ENCODE measurements at regions of chr1 and their contacts with region 1.

Region 1: GRCh38 chr1:151254217-151255213 is at the start of gene PSMD4:
- DNase-seq: peak; percentile 82 to 96 (median 93)
- ATAC-seq: peak; percentile 98
- H3K4me3 ChIP-seq: peak within 1 kb of the TSS; percentile 73
- H3K4me3 Mint-ChIP-seq: peak within 1 kb of the TSS; percentile 89 to 99 (median 96)
- H3K27ac ChIP-seq: peak within 1 kb of the TSS; percentile 79
- H3K27ac Mint-ChIP-seq: peak within 1 kb of the TSS; percentile 91 to 100 (median 95)
- H3K4me1 ChIP-seq: peaks cover 4 to 6% of the 10 kb centered on the region in 2 donors
- H3K4me1 Mint-ChIP-seq: peaks cover 23 to 47% (median 36%) of the 10 kb centered on the region in 7 donors
- H3K27me3 ChIP-seq: no peaks in the 10 kb centered on the region
- H3K27me3 Mint-ChIP-seq: peaks cover 0 to 3% (median 0%) of the 10 kb centered on the region in 5 donors
- total RNA-seq, gene PSMD4: 72.0 to 193 (median 126) TPM

Region 2: GRCh38 chr1:150363426-150364230 is 890.9 kb before region 1 on chr1 and contains the start of gene RPRD2:
- CTCF ChIA-PET with region 1: no interaction called
- POLR2A ChIA-PET with region 1: no interaction called
- intact Hi-C with region 1: loop called in 1 of 2 experiments (anchors 1 kb)
- DNase-seq: peak; percentile 83 to 100 (median 99)
- ATAC-seq: peak; percentile 97
- H3K4me3 ChIP-seq: peak within 1 kb of the TSS; percentile 99
- H3K4me3 Mint-ChIP-seq: peak within 1 kb of the TSS; percentile 86 to 100 (median 98)
- H3K27ac ChIP-seq: peak within 1 kb of the TSS; percentile 84
- H3K27ac Mint-ChIP-seq: peak within 1 kb of the TSS; percentile 95 to 100 (median 98)
- H3K4me1 ChIP-seq: peaks cover 10% of the 10 kb centered on the region in 2 donors
- H3K4me1 Mint-ChIP-seq: peaks cover 25 to 37% (median 32%) of the 10 kb centered on the region in 7 donors
- H3K27me3 ChIP-seq: no peaks in the 10 kb centered on the region
- H3K27me3 Mint-ChIP-seq: peaks cover 0 to 2% (median 0%) of the 10 kb centered on the region in 5 donors
- total RNA-seq, gene RPRD2: 33.2 to 62.2 (median 40.6) TPM

Region 3: DNA sequence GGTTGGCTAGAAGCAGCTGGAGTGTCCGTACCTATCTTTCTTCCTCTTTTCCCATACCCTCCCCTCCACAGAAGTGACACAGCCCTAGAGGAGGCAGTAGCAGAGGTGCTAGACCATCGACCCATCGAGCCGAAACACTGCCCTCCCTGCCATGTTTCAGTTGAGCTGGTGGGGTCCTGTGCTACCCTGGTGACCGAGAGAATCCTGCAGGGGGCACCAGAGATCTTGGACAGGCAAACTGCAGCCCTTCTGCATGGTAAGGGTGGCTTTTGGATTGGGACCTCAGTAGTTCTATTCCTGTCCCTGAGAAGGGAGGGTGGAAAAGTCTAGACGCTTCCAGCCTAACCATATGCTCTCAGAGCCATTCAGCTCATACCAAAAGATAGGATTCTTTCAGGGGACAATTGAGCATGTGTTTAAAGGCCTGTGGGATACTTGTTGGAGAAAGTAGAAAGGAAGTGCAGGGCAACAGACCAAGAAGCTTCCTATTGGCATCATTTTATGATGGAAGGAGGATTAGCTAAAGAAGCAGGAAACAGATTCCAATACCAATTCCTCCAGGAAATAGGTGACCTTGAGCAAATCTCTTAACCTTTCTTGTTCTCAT is 229.9 kb before region 1 on chr1:
- CTCF ChIA-PET with region 1: interaction called, 3 read pairs
- POLR2A ChIA-PET with region 1: no interaction called
- intact Hi-C with region 1: loop called (anchors 1 kb)
- DNase-seq: peak; percentile 72 to 91 (median 83)
- ATAC-seq: peak; percentile 100
- H3K4me3 ChIP-seq: no peak overlapping the region
- H3K4me3 Mint-ChIP-seq: peak overlapping the region; percentile 16 to 73 (median 61)
- H3K27ac ChIP-seq: no peak overlapping the region
- H3K27ac Mint-ChIP-seq: peak overlapping the region; percentile 37 to 93 (median 74)
- H3K4me1 ChIP-seq: no peaks in the 10 kb centered on the region
- H3K4me1 Mint-ChIP-seq: peaks cover 4 to 22% (median 6%) of the 10 kb centered on the region in 7 donors
- H3K27me3 ChIP-seq: no peaks in the 10 kb centered on the region
- H3K27me3 Mint-ChIP-seq: no peaks in the 10 kb centered on the region

Region 4: DNA sequence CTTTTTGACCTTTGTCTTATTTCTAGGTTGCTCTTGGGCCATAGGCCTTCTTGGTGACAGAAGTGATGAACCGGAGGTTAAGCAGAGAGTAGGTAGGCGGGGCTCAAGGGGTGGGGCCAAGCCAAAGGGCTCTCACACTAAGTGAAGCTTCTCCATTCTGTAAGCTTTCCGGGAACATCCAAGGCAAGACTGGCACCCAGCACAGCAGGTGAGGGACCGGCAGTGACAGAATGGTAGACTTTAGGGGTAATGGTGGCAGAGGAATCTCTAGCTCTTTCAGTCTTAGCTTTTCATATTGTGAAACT is 98.0 kb before region 1 on chr1 and contains the start of gene TNFAIP8L2:
- CTCF ChIA-PET with region 1: interaction called, 4 read pairs
- POLR2A ChIA-PET with region 1: interaction called, 13 read pairs
- intact Hi-C with region 1: loop called in 1 of 2 experiments (anchors 2 kb)
- DNase-seq: peak in 7 of 9 donors; percentile 50 to 75 (median 66)
- ATAC-seq: peak; percentile 90
- H3K4me3 ChIP-seq: peak within 1 kb of the TSS; percentile 98
- H3K4me3 Mint-ChIP-seq: peak within 1 kb of the TSS; percentile 93 to 100 (median 99)
- H3K27ac ChIP-seq: peak within 1 kb of the TSS; percentile 78
- H3K27ac Mint-ChIP-seq: peak within 1 kb of the TSS; percentile 88 to 97 (median 95)
- H3K4me1 ChIP-seq: peaks cover 23 to 27% of the 10 kb centered on the region in 2 donors
- H3K4me1 Mint-ChIP-seq: peaks cover 34 to 61% (median 46%) of the 10 kb centered on the region in 7 donors
- H3K27me3 ChIP-seq: no peaks in the 10 kb centered on the region
- H3K27me3 Mint-ChIP-seq: no peaks in the 10 kb centered on the region
- total RNA-seq, gene TNFAIP8L2: 3.1 to 59.4 (median 37.6) TPM

Region 5: DNA sequence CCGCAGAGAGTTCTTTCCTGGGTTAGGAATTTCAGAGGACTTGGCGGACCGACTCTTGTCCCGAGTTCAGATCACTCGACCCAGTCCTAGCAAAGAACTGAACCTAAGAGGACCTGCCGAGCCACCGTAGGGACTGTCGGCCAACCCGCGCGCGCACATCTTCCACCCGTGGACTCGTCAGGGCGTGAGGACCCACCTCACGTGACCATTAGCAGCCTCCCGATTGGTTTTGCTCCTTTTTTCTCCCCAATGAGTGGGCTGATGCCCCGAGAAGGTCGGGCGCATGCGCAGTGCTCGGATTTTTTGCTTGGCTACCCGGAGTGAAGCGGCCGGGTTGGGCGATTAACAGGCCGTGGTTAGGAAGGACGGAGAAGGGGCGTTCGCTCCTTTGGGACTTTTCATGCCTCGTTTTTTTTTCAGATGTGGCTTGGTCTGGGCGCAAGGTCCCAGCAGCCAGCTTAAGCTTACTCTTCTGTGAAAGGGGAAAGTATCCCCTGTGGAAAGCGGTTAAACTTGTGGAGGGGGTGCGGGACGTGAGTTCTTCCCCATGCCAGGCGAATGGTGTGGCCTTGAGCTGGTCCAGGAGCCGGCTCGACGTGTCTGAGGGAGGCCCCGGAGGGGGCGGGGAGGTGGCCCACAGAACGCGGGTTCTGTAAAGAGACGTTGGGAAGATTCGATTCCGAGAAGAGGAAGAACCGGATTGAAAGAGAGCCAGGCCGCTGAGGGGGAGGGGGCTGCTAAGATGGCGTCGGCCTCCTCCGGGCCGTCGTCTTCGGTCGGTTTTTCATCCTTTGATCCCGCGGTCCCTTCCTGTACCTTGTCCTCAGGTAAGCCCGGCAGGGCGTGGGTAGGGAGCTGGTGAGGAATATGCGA is 56.0 kb before region 1 on chr1 and contains the start of gene PIP5K1A:
- CTCF ChIA-PET with region 1: interaction called, 5 read pairs
- POLR2A ChIA-PET with region 1: interaction called, 3 read pairs
- intact Hi-C with region 1: loop called (anchors 1 kb)
- DNase-seq: peak; percentile 96 to 99 (median 97)
- ATAC-seq: peak; percentile 98
- H3K4me3 ChIP-seq: peak within 1 kb of the TSS; percentile 83
- H3K4me3 Mint-ChIP-seq: peak within 1 kb of the TSS; percentile 93 to 100 (median 98)
- H3K27ac ChIP-seq: peak within 1 kb of the TSS; percentile 88
- H3K27ac Mint-ChIP-seq: peak within 1 kb of the TSS; percentile 95 to 99 (median 98)
- H3K4me1 ChIP-seq: peaks cover 11% of the 10 kb centered on the region in 2 donors
- H3K4me1 Mint-ChIP-seq: peaks cover 31 to 56% (median 46%) of the 10 kb centered on the region in 7 donors
- H3K27me3 ChIP-seq: no peaks in the 10 kb centered on the region
- H3K27me3 Mint-ChIP-seq: peaks cover 0 to 12% (median 0%) of the 10 kb centered on the region in 5 donors
- total RNA-seq, gene PIP5K1A: 56.9 to 76.5 (median 59.5) TPM

Region 6: DNA sequence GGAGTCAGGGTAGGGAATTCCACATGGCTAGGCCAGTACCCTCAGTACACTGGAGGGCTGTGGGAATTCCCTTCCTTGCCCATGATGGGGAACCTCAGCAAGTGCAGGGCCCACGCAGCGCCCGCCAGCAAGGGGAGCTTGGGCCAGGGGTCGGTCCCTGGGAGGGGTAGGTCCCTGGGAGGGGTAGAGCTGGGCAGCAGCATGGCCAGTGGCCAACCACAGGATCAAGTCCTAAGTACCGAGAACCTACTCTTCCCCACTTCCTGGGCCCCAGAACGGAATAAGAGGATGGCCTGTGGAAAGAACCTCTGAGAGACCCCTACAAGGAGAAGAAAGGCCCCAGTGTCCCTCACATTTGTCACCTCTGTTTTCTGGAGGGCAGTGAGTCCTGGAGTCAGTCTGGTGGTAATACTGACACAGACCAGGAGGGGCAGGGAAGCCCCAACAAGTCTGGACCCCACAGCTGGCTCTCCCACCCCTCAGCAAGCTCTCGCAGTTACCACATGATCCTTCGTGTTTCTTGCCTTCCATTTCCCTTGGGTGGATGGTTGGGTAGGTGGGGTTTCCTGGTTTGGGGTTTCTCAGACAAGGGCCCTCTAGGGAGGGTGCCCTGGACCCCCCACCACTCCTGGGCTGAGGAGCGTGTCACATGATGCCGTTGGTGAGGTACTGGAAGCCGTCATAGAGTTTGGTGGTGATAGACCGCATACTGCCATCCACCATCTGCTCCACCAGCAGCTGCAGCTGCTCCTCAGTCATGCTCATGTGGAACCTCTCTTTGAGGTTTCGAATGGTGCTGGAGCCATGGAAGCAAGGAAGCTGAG is 37.9 kb after region 1 on chr1:
- CTCF ChIA-PET with region 1: no interaction called
- POLR2A ChIA-PET with region 1: no interaction called
- intact Hi-C with region 1: no loop called
- DNase-seq: peak in 1 of 9 donors; percentile 23
- ATAC-seq: peak; percentile 47
- H3K4me3 ChIP-seq: no peak overlapping the region
- H3K4me3 Mint-ChIP-seq: no peak overlapping the region
- H3K27ac ChIP-seq: no peak overlapping the region
- H3K27ac Mint-ChIP-seq: peak overlapping the region in 7 of 9 donors; percentile 22 to 86 (median 66)
- H3K4me1 ChIP-seq: no peaks in the 10 kb centered on the region
- H3K4me1 Mint-ChIP-seq: peaks cover 7 to 28% (median 11%) of the 10 kb centered on the region in 7 donors
- H3K27me3 ChIP-seq: no peaks in the 10 kb centered on the region
- H3K27me3 Mint-ChIP-seq: no peaks in the 10 kb centered on the region

Region 7: DNA sequence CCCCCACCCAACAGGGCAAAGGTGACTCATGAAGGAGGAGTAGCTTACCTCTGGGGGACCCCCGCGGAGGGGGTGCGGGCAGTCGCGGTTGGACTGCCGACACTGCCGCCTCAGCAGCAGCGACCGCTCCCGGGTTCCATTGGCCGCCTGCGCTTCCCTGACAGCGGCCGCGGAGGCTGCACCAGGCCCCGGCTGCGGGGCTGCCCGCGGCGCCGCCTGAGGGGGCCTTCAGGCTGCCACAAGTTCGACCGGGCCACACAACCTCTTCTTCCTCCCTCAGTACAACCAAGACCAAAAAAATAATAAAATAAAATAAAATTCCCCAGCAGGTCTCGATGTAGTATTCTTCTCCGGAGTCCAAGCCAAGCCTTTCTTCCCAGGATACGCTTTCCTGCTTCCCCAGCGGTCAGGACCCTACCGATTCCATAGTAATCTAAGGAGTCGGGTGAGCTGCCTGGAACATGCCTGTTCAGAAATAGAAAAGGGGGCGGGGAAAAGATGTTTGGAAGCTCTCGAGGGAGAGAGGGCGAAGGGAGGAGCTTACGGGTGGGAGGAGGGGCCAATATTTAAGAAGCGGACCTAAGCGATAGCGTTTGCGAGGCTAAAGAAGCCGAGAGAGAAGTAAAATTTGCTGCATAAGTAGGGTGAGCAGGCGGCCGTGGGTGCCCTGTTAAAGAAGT is 72.8 kb after region 1 on chr1 and contains the start of gene PI4KB:
- CTCF ChIA-PET with region 1: no interaction called
- POLR2A ChIA-PET with region 1: no interaction called
- intact Hi-C with region 1: loop called (anchors 1 kb)
- DNase-seq: peak; percentile 72 to 96 (median 93)
- ATAC-seq: peak; percentile 96
- H3K4me3 ChIP-seq: peak within 1 kb of the TSS; percentile 72
- H3K4me3 Mint-ChIP-seq: peak within 1 kb of the TSS; percentile 91 to 100 (median 96)
- H3K27ac ChIP-seq: peak within 1 kb of the TSS; percentile 96
- H3K27ac Mint-ChIP-seq: peak within 1 kb of the TSS; percentile 90 to 100 (median 97)
- H3K4me1 ChIP-seq: peaks cover 6 to 18% of the 10 kb centered on the region in 2 donors
- H3K4me1 Mint-ChIP-seq: peaks cover 14 to 53% (median 44%) of the 10 kb centered on the region in 7 donors
- H3K27me3 ChIP-seq: no peaks in the 10 kb centered on the region
- H3K27me3 Mint-ChIP-seq: peaks cover 0 to 2% (median 0%) of the 10 kb centered on the region in 5 donors
- total RNA-seq, gene PI4KB: 64.0 to 91.9 (median 76.3) TPM

Region 8: DNA sequence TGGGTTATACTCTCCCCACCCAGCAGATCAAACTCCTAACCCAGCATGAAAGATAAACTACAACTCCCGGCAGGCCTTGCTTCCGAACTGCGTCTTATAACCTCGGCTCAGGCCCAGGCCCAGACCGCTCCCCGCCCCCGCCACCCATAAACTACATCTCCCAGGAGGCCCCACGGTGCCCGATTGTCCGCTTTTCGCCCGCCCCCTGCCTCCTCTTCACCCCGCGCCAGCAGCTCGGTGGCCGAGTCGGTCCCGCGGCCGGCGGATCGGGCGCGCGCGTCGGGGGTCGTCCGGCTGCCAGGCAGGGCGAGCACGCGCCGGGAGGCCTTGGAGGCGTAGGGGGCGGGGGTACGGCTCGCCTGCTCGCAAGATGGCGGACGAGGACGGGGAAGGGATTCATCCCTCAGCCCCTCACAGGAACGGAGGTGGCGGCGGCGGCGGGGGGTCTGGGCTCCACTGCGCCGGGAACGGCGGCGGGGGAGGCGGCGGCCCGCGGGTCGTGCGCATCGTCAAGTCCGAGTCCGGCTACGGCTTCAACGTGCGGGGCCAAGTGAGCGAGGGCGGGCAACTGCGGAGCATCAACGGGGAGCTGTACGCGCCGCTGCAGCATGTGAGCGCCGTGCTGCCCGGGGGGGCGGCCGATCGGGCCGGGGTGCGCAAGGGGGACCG is 357.5 kb after region 1 on chr1 and contains the start of gene SNX27:
- CTCF ChIA-PET with region 1: no interaction called
- POLR2A ChIA-PET with region 1: no interaction called
- intact Hi-C with region 1: loop called (anchors 1 to 5 kb)
- DNase-seq: peak; percentile 76 to 94 (median 87)
- ATAC-seq: peak; percentile 95
- H3K4me3 ChIP-seq: peak within 1 kb of the TSS; percentile 80
- H3K4me3 Mint-ChIP-seq: peak within 1 kb of the TSS; percentile 89 to 100 (median 97)
- H3K27ac ChIP-seq: peak within 1 kb of the TSS; percentile 98
- H3K27ac Mint-ChIP-seq: peak within 1 kb of the TSS; percentile 88 to 98 (median 92)
- H3K4me1 ChIP-seq: peaks cover 11 to 18% of the 10 kb centered on the region in 2 donors
- H3K4me1 Mint-ChIP-seq: peaks cover 40 to 50% (median 45%) of the 10 kb centered on the region in 7 donors
- H3K27me3 ChIP-seq: no peaks in the 10 kb centered on the region
- H3K27me3 Mint-ChIP-seq: peaks cover 0 to 11% (median 6%) of the 10 kb centered on the region in 5 donors
- total RNA-seq, gene SNX27: 25.5 to 42.1 (median 41.0) TPM

Region 9: DNA sequence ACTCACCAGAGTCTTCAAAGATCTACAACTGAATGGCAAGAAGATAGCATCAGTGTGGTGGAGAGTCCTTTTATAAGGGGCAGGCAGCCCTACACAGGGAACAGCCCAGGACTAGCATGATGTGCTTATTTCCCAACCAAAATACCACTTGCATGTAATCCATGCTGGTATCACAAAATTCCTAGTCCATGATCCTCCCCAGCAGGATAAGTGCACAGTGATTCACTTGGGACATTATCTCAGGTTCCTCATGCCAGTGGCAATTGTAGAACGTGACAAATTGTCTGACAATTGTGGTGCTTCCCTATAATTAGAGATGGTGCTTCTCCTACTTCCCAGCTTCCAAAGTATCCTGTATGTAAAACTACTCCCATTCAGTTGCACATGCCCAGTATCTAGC is 1896.3 kb after region 1 on chr1 and contains the start of gene SPRR2G:
- CTCF ChIA-PET with region 1: no interaction called
- POLR2A ChIA-PET with region 1: no interaction called
- intact Hi-C with region 1: no loop called
- DNase-seq: no peak
- ATAC-seq: no peak
- H3K4me3 ChIP-seq: no peak within 1 kb of the TSS
- H3K4me3 Mint-ChIP-seq: no peak within 1 kb of the TSS
- H3K27ac ChIP-seq: no peak within 1 kb of the TSS
- H3K27ac Mint-ChIP-seq: no peak within 1 kb of the TSS
- H3K4me1 ChIP-seq: no peaks in the 10 kb centered on the region
- H3K4me1 Mint-ChIP-seq: no peaks in the 10 kb centered on the region
- H3K27me3 ChIP-seq: no peaks in the 10 kb centered on the region
- H3K27me3 Mint-ChIP-seq: peaks cover 20 to 46% (median 43%) of the 10 kb centered on the region in 5 donors
- total RNA-seq, gene SPRR2G: not detected